Adrenal gland (tissue), 19 donors: ENCODE measurements at regions of chr11 and their contacts with region 1.

Region 1: GRCh38 chr11:44133335-44133946 is 38.0 kb downstream of the EXT2 start:
- DNase-seq: peak in 2 of 7 donors; percentile 20 to 22
- H3K4me3 ChIP-seq: no peak overlapping the region
- H3K27ac ChIP-seq: no peak overlapping the region
- H3K4me1 ChIP-seq: peaks cover 1 to 4% of the 10 kb centered on the region in 2 donors
- H3K27me3 ChIP-seq: no peaks in the 10 kb centered on the region
- CTCF ChIP-seq: peak; percentile 27 to 57 (median 51)
- POLR2A ChIP-seq: no peak

Region 2: DNA sequence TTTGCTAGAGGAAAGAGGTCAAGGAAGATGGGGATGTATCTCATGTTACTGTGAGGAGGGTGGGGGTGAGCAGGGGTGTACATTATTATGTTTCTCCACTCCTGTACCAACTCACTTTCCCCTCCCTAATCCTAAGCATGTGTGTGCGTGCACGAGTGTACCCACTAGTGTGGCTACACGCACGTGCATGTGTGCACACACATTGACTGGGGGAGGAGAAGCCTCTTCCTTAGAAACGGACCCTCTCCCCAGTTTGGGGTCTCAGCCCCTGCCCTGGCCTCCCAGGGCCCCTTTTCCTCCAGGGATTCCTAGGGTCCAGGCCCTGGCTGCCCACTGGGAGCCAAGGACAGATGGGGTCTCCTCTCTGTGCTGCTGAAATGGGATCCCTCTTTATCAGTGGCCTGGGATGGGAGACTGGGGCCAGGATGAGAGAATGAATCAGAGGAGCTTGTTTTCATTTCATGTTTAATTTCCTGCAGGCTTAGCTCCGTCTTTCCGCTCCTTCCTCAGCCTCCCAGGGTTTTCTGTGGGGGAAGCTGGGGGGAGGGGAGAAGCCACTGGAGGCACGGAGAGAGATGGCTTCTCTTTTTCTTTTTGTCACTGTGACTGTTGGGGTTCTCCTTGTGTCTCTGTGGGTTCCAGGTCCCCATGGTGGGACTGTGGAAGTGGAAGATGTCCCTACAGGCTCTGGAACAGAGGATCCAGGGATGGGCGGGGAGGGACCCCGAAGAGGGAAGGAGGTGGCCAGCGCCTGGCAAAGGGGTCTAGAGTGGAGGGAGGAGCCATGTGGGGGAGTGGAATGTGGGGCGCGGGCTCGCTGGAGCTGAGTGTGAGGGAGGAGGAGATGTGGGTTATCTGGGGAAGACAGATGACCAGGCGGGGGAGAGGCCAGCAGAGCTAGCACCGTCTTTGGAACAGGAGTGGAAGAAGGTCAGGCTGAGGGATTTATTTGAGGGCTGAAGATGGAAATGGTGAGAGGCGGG is 136.2 kb after region 1 on chr11:
- intact Hi-C with region 1: loop called in 1 of 2 experiments (anchors 10 kb)
- DNase-seq: peak in 1 of 7 donors; percentile 15
- H3K4me3 ChIP-seq: no peak overlapping the region
- H3K27ac ChIP-seq: no peak overlapping the region
- H3K4me1 ChIP-seq: no peaks in the 10 kb centered on the region
- H3K27me3 ChIP-seq: no peaks in the 10 kb centered on the region
- CTCF ChIP-seq: no peak
- POLR2A ChIP-seq: no peak